PC-3 (cell line): ENCODE measurements at regions of chr2 and their contacts with region 1.

Region 1: DNA sequence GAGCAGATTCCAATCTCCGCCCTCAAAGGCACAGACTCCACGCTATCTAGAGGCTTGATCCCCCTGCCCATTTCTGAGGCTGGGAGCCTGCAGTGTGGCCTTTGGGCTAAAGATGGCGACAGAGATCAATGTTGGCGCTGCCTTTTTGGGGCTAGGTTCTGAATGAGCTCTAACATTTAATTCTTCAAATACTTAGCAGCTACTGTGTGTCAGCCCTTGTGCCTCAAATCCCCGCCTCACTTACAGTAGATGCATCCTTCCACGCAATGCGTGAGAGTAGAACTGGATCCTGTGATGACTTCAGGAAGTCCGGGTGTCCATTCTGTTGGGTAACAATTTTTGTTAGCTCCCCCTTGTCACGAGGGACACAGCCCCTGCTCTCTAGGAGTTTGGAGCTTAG is 12.4 kb downstream of the IL1F10 start:
- DNase-seq: peak; percentile 73
- ATAC-seq: peak; percentile 5; the same call in 1 of the 2 replicates
- H3K4me3 ChIP-seq: no peak overlapping the region
- H3K27ac ChIP-seq: peak overlapping the region; percentile 99
- H3K4me1 ChIP-seq: peaks cover 32% of the 10 kb centered on the region
- H3K27me3 ChIP-seq: no peaks in the 10 kb centered on the region
- CTCF ChIP-seq: peak; percentile 86

Region 2: GRCh38 chr2:112749755-112750559 is 330.2 kb before region 1 on chr2:
- CTCF ChIA-PET with region 1: no interaction called
- POLR2A ChIA-PET with region 1: no interaction called
- intact Hi-C with region 1: loop called (anchors 5 kb)
- DNase-seq: peak; percentile 78
- ATAC-seq: peak; percentile 92
- H3K4me3 ChIP-seq: no peak overlapping the region
- H3K27ac ChIP-seq: peak overlapping the region; percentile 33
- H3K4me1 ChIP-seq: no peaks in the 10 kb centered on the region
- H3K27me3 ChIP-seq: no peaks in the 10 kb centered on the region
- CTCF ChIP-seq: peak; percentile 96

Region 3: DNA sequence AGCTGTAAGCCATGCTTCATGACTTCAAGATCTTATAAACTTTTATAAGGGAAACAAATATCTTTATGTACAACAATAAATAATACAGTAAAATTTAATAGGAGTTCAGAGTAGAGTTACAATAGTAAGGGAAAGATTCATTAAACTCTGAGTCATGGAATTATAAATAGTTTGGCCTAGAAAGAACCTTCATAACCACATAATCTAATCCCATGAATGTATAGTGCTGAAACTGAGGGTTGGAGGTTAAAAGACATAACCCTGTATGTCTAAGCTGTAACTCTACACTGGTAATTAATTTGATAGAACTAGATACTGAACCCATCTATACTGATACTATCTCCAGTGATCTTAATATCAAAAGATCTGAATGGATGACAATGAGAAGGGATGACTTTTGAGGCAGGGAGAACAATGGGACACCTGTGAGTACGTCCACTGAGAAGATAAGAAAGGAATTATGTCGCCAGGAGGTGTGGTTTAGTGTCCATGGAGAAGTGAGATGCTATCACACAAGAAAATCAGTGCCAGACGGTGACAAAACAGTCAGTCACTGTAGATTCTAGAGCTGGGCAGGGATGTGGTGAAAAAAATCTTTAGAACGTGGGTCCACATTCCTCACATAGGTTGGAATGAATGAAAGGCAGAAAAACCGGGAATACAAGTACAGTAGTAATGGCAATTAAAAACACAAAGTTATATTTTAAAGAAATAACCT is 11.3 kb before region 1 on chr2:
- CTCF ChIA-PET with region 1: interaction called, 3 read pairs
- POLR2A ChIA-PET with region 1: interaction called, 6 read pairs
- intact Hi-C with region 1: loop called (anchors 1 kb)
- DNase-seq: peak; percentile 93
- ATAC-seq: peak; percentile 82
- H3K4me3 ChIP-seq: 0 out of 2 replicates have a peak overlapping the region, but pooled peaks have one; percentile 7
- H3K27ac ChIP-seq: peak overlapping the region; percentile 95
- H3K4me1 ChIP-seq: peaks cover 36% of the 10 kb centered on the region
- H3K27me3 ChIP-seq: no peaks in the 10 kb centered on the region
- CTCF ChIP-seq: no peak

Region 4: GRCh38 chr2:113157118-113157896 is 77.2 kb after region 1 on chr2:
- CTCF ChIA-PET with region 1: interaction called, 3 read pairs
- POLR2A ChIA-PET with region 1: no interaction called
- intact Hi-C with region 1: loop called (anchors 2 kb)
- DNase-seq: peak; percentile 75
- ATAC-seq: peak; percentile 60
- H3K4me3 ChIP-seq: peak overlapping the region; percentile 83
- H3K27ac ChIP-seq: peak overlapping the region; percentile 90
- H3K4me1 ChIP-seq: peaks cover 30% of the 10 kb centered on the region
- H3K27me3 ChIP-seq: no peaks in the 10 kb centered on the region
- CTCF ChIP-seq: no peak

Region 5: DNA sequence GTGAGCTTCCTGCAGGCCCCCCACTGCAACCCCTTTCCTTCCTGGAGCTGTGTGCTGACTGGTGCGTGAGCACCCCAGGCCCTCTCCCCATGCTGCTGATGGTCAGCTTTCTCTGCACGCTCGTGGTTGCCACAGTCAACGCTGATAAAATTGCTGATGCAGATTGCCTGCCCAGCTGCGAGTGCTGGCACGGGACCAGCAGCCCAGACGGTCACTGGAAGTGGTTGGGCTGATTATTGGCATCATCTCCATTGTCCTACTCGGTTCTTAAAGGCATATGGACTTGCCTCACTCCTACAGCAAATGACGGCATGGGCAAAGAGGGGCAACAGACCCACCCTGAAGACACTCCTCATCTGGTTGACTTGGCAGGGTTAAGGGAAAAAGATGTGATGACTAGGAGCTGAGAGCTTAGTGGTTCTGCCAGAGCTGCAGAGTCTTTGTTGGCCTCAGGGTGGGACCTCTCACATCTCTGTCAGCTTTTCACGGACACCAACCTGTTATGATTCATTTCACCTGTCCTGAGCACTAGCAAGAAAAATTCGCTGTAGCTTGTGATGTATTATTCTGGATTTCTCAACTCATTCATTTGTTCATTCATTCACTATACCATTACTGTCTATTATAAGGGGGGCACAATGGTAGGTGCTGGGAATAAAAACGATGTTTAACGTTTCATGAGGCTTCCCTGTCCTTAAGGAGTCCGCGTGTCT is 160.2 kb after region 1 on chr2:
- CTCF ChIA-PET with region 1: interaction called, 4 read pairs
- POLR2A ChIA-PET with region 1: no interaction called
- intact Hi-C with region 1: loop called (anchors 2 kb)
- DNase-seq: peak; percentile 88
- ATAC-seq: peak; percentile 35
- H3K4me3 ChIP-seq: peak overlapping the region; percentile 54
- H3K27ac ChIP-seq: peak overlapping the region; percentile 98
- H3K4me1 ChIP-seq: peaks cover 50% of the 10 kb centered on the region
- H3K27me3 ChIP-seq: no peaks in the 10 kb centered on the region
- CTCF ChIP-seq: no peak

Region 6: DNA sequence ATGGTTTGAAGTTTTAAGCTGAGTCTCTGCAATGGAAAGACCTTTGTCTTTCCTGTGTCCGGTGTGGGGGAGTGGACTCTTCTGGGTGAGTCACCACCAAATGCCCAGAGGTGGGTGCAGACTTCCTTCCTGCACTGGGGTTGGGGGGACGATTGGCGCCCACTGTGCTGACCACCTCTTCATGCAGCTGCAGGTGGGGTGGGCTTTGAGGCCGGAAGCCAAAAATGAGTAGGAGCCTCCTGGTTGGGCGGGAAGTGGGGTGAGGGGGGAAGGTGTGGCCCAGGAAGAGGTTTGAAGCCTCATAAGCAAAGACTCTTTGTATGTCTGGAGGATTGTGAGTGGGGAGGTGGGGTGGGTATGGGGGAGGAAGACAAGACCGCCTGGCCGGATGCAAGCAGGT is 171.0 kb after region 1 on chr2:
- CTCF ChIA-PET with region 1: no interaction called
- POLR2A ChIA-PET with region 1: no interaction called
- intact Hi-C with region 1: no loop called
- DNase-seq: peak; percentile 29
- ATAC-seq: no peak; the same call in 1 of the 2 replicates
- H3K4me3 ChIP-seq: no peak overlapping the region
- H3K27ac ChIP-seq: no peak overlapping the region
- H3K4me1 ChIP-seq: peaks cover 19% of the 10 kb centered on the region
- H3K27me3 ChIP-seq: no peaks in the 10 kb centered on the region
- CTCF ChIP-seq: no peak

Region 7: GRCh38 chr2:113273027-113273551 is 193.0 kb after region 1 on chr2:
- CTCF ChIA-PET with region 1: no interaction called
- POLR2A ChIA-PET with region 1: no interaction called
- intact Hi-C with region 1: no loop called
- DNase-seq: no peak
- ATAC-seq: no peak
- H3K4me3 ChIP-seq: no peak overlapping the region
- H3K27ac ChIP-seq: no peak overlapping the region
- H3K4me1 ChIP-seq: no peaks in the 10 kb centered on the region
- H3K27me3 ChIP-seq: no peaks in the 10 kb centered on the region
- CTCF ChIP-seq: no peak